Activated naive CD4-positive, alpha-beta T cell treated with anti-CD3 and anti-CD28 coated beads for 36 hours (primary cell): ENCODE measurements at regions of chr20 and their contacts with region 1.

Region 1: GRCh38 chr20:1118336-1119127 is at the start of gene PSMF1:
- DNase-seq: peak; percentile 96
- H3K4me3 Mint-ChIP-seq: peak within 1 kb of the TSS; percentile 88
- H3K27ac Mint-ChIP-seq: peak within 1 kb of the TSS; percentile 88
- H3K4me1 Mint-ChIP-seq: peaks cover 52% of the 10 kb centered on the region
- H3K27me3 Mint-ChIP-seq: no peaks in the 10 kb centered on the region
- total RNA-seq, gene PSMF1: 138 to 143 TPM

Region 2: DNA sequence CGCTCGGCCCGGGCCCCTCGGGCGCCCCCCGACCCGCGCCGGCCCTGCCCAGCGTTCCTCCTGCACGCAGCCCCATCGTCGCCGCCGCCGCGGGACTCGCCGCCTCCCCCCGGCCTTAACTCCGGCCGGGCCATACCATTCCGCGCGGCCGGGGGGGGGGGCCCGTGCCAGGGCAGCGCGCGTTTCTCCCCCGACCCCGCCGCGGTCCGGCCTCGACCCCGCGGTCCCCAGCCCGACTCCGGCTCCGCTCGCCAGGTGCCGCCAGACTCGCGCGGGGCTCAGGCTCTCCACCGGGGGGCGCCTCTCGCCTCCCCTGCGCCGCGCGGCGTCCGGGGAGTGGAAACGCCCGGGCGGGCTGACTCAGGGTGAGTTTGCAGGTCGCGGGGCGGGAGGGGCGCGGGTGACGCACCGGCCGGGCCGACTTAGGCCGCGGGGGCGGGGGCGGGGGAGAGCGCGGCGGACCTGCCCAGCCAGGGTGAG is 465.4 kb before region 1 on chr20 and contains the start of gene SRXN1:
- CTCF ChIA-PET with region 1: no interaction called
- intact Hi-C with region 1: loop called (anchors 5 kb)
- DNase-seq: peak; percentile 86
- H3K4me3 Mint-ChIP-seq: peak within 1 kb of the TSS; percentile 72
- H3K27ac Mint-ChIP-seq: peak within 1 kb of the TSS; percentile 4
- H3K4me1 Mint-ChIP-seq: peaks cover 8% of the 10 kb centered on the region
- H3K27me3 Mint-ChIP-seq: peaks cover 13% of the 10 kb centered on the region
- total RNA-seq, gene SRXN1: 6.7 to 6.8 TPM

Region 3: GRCh38 chr20:844473-845225 is 273.9 kb before region 1 on chr20:
- CTCF ChIA-PET with region 1: no interaction called
- intact Hi-C with region 1: loop called (anchors 2 kb)
- DNase-seq: peak; percentile 95
- H3K4me3 Mint-ChIP-seq: peak overlapping the region; percentile 75
- H3K27ac Mint-ChIP-seq: peak overlapping the region; percentile 41
- H3K4me1 Mint-ChIP-seq: peaks cover 43% of the 10 kb centered on the region
- H3K27me3 Mint-ChIP-seq: no peaks in the 10 kb centered on the region

Region 4: GRCh38 chr20:1108437-1108920 is 10.1 kb before region 1 on chr20:
- CTCF ChIA-PET with region 1: interaction called, 10 read pairs
- intact Hi-C with region 1: no loop called
- DNase-seq: peak; percentile 76
- H3K4me3 Mint-ChIP-seq: no peak overlapping the region
- H3K27ac Mint-ChIP-seq: no peak overlapping the region
- H3K4me1 Mint-ChIP-seq: peaks cover 3% of the 10 kb centered on the region
- H3K27me3 Mint-ChIP-seq: no peaks in the 10 kb centered on the region

Region 5: GRCh38 chr20:1225783-1226654 is 107.5 kb after region 1 on chr20 and contains the start of gene RAD21L1:
- CTCF ChIA-PET with region 1: no interaction called
- intact Hi-C with region 1: loop called (anchors 1 kb)
- DNase-seq: peak; percentile 88
- H3K4me3 Mint-ChIP-seq: peak within 1 kb of the TSS; percentile 83
- H3K27ac Mint-ChIP-seq: no peak within 1 kb of the TSS
- H3K4me1 Mint-ChIP-seq: peaks cover 10% of the 10 kb centered on the region
- H3K27me3 Mint-ChIP-seq: peaks cover 6% of the 10 kb centered on the region
- total RNA-seq, gene RAD21L1: not detected

Region 6: GRCh38 chr20:1392823-1393506 is 274.4 kb after region 1 on chr20 and contains the start of gene FKBP1A:
- CTCF ChIA-PET with region 1: no interaction called
- intact Hi-C with region 1: loop called (anchors 1 kb)
- DNase-seq: peak; percentile 92
- H3K4me3 Mint-ChIP-seq: peak within 1 kb of the TSS; percentile 91
- H3K27ac Mint-ChIP-seq: peak within 1 kb of the TSS; percentile 88
- H3K4me1 Mint-ChIP-seq: peaks cover 54% of the 10 kb centered on the region
- H3K27me3 Mint-ChIP-seq: no peaks in the 10 kb centered on the region
- total RNA-seq, gene FKBP1A: 232 to 237 TPM

Region 7: GRCh38 chr20:1466211-1467081 is 347.9 kb after region 1 on chr20 and contains the start of gene NSFL1C:
- CTCF ChIA-PET with region 1: no interaction called
- intact Hi-C with region 1: loop called (anchors 1 kb)
- DNase-seq: peak; percentile 97
- H3K4me3 Mint-ChIP-seq: peak within 1 kb of the TSS; percentile 80
- H3K27ac Mint-ChIP-seq: peak within 1 kb of the TSS; percentile 71
- H3K4me1 Mint-ChIP-seq: peaks cover 44% of the 10 kb centered on the region
- H3K27me3 Mint-ChIP-seq: peaks cover 6% of the 10 kb centered on the region
- total RNA-seq, gene NSFL1C: 80.4 to 84.1 TPM